Sigmoid colon (tissue), 7 donors: ENCODE measurements at regions of chr7 and their contacts with region 1.

Region 1: DNA sequence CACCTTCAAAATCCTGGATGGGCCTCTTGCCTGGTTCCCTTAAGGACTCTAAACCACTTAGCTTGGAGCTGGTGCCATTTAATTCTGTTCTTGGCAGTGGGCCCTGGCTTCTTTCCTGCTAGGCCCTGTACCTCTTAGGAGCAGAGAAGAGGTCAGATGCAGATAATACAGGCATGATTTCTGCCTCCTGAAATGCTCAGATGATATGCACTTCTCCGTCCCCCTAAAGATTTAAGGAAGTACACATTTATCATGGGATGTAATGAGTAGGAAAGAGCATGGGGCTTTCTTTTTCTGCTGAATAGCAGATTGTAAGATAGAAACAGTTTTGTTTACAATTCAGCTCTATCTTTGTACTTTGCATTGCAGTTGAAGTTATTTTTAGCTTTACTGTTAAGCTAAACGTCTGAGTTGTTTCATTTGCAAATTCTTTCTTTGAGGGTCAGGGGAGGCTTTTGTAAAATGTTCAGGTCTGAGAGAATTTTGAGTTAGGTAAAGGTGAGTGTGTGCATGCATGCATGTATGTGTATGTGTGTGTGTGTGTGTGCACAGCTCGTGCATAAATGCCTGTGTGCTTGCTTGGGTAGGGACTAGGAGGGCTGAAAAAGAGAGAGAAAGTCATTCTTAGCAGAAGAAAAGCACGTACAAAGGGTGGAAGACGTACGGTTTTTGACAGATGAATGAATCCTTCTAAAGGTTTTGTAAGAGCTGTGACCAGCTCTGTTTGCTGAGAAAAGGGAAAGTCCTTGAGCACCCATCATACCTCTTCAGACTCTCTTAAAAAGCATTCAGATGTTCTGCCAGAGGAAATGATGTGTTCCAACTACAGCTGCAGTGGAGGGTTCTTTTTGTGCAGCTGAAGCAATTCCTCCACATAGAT is 364.2 kb downstream of the AUTS2 start:
- DNase-seq: no peak
- H3K4me3 ChIP-seq: peak overlapping the region in 1 of 4 donors; percentile 3
- H3K27ac ChIP-seq: peak overlapping the region in 3 of 4 donors; percentile 53 to 59 (median 55)
- H3K4me1 ChIP-seq: peaks cover 0 to 60% (median 40%) of the 10 kb centered on the region in 4 donors
- H3K27me3 ChIP-seq: no peaks in the 10 kb centered on the region
- CTCF ChIP-seq: no peak
- EP300 ChIP-seq: no peak
- POLR2A ChIP-seq: no peak

Region 2: DNA sequence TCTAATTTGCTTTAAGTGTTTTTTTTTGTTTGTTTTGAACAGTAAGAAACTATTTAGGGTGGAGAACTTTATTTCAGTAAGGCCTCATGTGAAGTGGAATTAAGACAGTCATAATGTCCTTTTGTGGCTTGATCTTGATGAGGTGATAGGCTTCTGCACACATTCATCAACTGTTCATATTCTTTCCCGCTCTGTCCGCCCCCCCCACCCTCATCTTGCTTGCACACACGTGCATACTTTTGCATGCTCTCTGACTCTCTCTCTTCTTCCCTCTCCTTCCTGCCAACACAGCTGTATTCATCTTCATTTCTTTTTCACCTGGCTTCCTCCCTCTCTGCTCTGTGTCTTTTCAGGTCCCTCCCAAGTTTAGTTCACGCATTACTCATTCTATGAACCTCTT is 65.4 kb after region 1 on chr7:
- intact Hi-C with region 1: loop called (anchors 10 kb)
- DNase-seq: no peak
- H3K4me3 ChIP-seq: no peak overlapping the region
- H3K27ac ChIP-seq: no peak overlapping the region
- H3K4me1 ChIP-seq: peaks cover 0 to 21% (median 11%) of the 10 kb centered on the region in 4 donors
- H3K27me3 ChIP-seq: no peaks in the 10 kb centered on the region
- CTCF ChIP-seq: no peak
- EP300 ChIP-seq: no peak
- POLR2A ChIP-seq: no peak